Naive thymus-derived CD4-positive, alpha-beta T cell (primary cell): ENCODE measurements at regions of chr7 and their contacts with region 1.

Region 1: GRCh38 chr7:30974605-30975255 is 11.0 kb downstream of the GHRHR start:
- DNase-seq: peak in 1 of 9 donors; percentile 64
- ATAC-seq: peak; percentile 51
- H3K4me3 ChIP-seq: no peak overlapping the region
- H3K4me3 Mint-ChIP-seq: no peak overlapping the region
- H3K27ac ChIP-seq: no peak overlapping the region
- H3K27ac Mint-ChIP-seq: peak overlapping the region in 1 of 9 donors; percentile 84
- H3K4me1 ChIP-seq: no peaks in the 10 kb centered on the region
- H3K4me1 Mint-ChIP-seq: peaks cover 0 to 17% (median 0%) of the 10 kb centered on the region in 7 donors
- H3K27me3 ChIP-seq: peaks cover 0 to 4% of the 10 kb centered on the region in 2 donors
- H3K27me3 Mint-ChIP-seq: peaks cover 21 to 40% (median 29%) of the 10 kb centered on the region in 5 donors

Region 2: GRCh38 chr7:30938435-30939316 is 36.1 kb before region 1 on chr7:
- CTCF ChIA-PET with region 1: no interaction called
- POLR2A ChIA-PET with region 1: no interaction called
- intact Hi-C with region 1: loop called in 1 of 2 experiments (anchors 1 kb)
- DNase-seq: peak in 8 of 9 donors; percentile 10 to 76 (median 36)
- ATAC-seq: peak; percentile 69
- H3K4me3 ChIP-seq: no peak overlapping the region
- H3K4me3 Mint-ChIP-seq: no peak overlapping the region
- H3K27ac ChIP-seq: no peak overlapping the region
- H3K27ac Mint-ChIP-seq: no peak overlapping the region
- H3K4me1 ChIP-seq: no peaks in the 10 kb centered on the region
- H3K4me1 Mint-ChIP-seq: no peaks in the 10 kb centered on the region
- H3K27me3 ChIP-seq: no peaks in the 10 kb centered on the region
- H3K27me3 Mint-ChIP-seq: peaks cover 25 to 43% (median 35%) of the 10 kb centered on the region in 5 donors

Region 3: DNA sequence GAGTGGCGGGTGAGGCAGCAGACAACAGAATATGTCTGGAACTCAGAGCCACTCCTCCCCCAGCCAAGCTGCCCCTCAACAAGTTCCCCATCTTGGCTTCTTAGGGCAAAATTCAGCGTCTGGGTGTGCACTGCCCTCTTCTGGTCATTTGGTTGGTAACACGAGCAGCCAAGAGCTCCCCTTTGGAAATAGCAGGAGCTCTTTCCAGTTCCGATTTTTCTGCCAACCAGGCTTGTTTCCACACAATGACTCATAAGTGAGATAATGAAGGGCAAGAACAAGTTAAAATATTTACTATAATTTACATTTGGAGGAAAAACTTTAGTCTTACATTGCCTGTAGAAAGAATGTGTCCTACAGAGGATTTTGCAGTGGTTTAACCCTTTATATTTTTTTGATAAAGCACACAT is 147.9 kb after region 1 on chr7:
- CTCF ChIA-PET with region 1: no interaction called
- POLR2A ChIA-PET with region 1: no interaction called
- intact Hi-C with region 1: loop called in 1 of 2 experiments (anchors 2 kb)
- DNase-seq: peak in 4 of 9 donors; percentile 5 to 31 (median 12)
- ATAC-seq: peak; percentile 59
- H3K4me3 ChIP-seq: no peak overlapping the region
- H3K4me3 Mint-ChIP-seq: no peak overlapping the region
- H3K27ac ChIP-seq: no peak overlapping the region
- H3K27ac Mint-ChIP-seq: no peak overlapping the region
- H3K4me1 ChIP-seq: no peaks in the 10 kb centered on the region
- H3K4me1 Mint-ChIP-seq: no peaks in the 10 kb centered on the region
- H3K27me3 ChIP-seq: no peaks in the 10 kb centered on the region
- H3K27me3 Mint-ChIP-seq: peaks cover 6 to 41% (median 13%) of the 10 kb centered on the region in 5 donors